ENCODE measurements at regions of chr22 and their contacts with region 1.

Region 1: GRCh38 chr22:36239401-36240171 is at the start of gene APOL2:
- DNase-seq: peak; percentile 92
- ATAC-seq: peak; percentile 96
- H3K4me3 Mint-ChIP-seq: peak within 1 kb of the TSS; percentile 99
- H3K27ac Mint-ChIP-seq: peak within 1 kb of the TSS; percentile 95
- H3K4me1 Mint-ChIP-seq: peaks cover 45% of the 10 kb centered on the region
- H3K27me3 Mint-ChIP-seq: no peaks in the 10 kb centered on the region
- total RNA-seq, gene APOL2: 82.6 to 86.4 TPM

Region 2: DNA sequence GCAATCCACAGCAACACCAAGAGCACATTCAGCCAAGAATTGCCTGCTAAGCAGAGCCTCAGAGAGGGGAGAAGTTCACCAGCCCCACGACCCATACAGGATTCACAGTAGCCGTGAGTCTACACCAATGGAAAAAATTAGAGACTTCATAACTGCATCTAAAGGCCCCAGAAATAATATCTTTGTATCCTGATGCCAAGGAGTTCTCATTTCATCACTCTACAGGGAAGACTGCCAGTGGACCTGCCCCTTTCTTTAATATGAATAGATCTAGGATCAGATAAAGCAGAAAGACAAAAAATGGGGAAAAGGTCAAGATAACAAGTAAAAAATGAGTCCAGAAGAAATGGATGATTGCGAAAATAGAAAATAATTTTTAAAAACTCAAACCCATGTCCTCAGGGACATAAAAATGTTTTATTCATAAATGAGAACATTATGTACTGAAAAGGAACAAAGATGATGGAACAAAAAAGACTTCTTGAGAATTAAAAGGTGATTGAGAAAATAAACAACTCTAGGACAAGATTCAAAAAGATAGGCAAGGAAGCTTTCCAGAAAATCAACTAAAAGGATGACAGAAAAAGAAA is 88.5 kb before region 1 on chr22:
- CTCF ChIA-PET with region 1: no interaction called
- DNase-seq: no peak
- ATAC-seq: no peak
- H3K4me3 Mint-ChIP-seq: no peak overlapping the region
- H3K27ac Mint-ChIP-seq: peak overlapping the region; percentile 41
- H3K4me1 Mint-ChIP-seq: peaks cover 59% of the 10 kb centered on the region
- H3K27me3 Mint-ChIP-seq: no peaks in the 10 kb centered on the region

Region 3: DNA sequence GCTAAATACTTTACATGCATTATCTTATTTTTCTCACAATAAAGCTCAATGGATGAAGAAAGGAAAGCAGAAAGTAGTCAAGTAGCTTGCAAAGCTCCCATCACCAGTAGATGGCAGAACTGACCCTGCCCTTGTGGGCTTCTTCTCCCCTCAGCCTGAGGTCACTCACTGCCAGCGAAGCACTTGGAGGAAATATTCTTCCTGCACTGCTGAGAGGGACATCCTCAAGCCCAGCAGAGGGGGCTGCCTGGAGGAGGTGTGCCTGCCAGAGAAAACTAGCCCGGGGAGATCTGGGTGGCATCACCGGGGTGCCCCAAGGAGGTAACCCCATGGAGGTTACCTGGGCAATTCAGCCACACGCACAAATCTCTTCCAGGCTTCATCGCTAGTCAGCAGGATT is 44.6 kb before region 1 on chr22:
- CTCF ChIA-PET with region 1: interaction called, 16 read pairs
- DNase-seq: peak; percentile 75
- ATAC-seq: peak; percentile 65
- H3K4me3 Mint-ChIP-seq: no peak overlapping the region
- H3K27ac Mint-ChIP-seq: no peak overlapping the region
- H3K4me1 Mint-ChIP-seq: peaks cover 47% of the 10 kb centered on the region
- H3K27me3 Mint-ChIP-seq: peaks cover 2% of the 10 kb centered on the region

Region 4: DNA sequence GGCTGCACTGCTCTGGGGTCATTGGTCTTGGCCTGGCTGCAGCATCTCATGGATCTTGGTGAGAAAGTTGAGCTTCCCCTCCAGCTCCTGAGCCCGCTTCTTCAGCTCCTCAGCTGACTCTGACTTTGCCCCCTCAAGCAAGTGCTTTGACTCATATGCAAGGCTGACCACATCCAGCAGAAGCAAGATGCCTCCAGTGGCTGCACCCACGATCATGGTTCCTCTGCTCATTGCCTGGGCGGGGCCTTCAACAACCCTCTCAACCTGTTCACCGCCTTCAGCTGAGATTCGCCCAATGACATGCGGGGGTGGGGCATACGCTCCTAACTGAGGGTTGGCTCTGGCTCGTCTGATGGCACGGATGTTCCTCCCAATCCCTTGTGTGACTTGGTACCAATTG is 12.2 kb before region 1 on chr22:
- CTCF ChIA-PET with region 1: interaction called, 19 read pairs
- DNase-seq: peak; percentile 64
- ATAC-seq: peak; percentile 65
- H3K4me3 Mint-ChIP-seq: no peak overlapping the region
- H3K27ac Mint-ChIP-seq: no peak overlapping the region
- H3K4me1 Mint-ChIP-seq: peaks cover 20% of the 10 kb centered on the region
- H3K27me3 Mint-ChIP-seq: no peaks in the 10 kb centered on the region

Region 5: DNA sequence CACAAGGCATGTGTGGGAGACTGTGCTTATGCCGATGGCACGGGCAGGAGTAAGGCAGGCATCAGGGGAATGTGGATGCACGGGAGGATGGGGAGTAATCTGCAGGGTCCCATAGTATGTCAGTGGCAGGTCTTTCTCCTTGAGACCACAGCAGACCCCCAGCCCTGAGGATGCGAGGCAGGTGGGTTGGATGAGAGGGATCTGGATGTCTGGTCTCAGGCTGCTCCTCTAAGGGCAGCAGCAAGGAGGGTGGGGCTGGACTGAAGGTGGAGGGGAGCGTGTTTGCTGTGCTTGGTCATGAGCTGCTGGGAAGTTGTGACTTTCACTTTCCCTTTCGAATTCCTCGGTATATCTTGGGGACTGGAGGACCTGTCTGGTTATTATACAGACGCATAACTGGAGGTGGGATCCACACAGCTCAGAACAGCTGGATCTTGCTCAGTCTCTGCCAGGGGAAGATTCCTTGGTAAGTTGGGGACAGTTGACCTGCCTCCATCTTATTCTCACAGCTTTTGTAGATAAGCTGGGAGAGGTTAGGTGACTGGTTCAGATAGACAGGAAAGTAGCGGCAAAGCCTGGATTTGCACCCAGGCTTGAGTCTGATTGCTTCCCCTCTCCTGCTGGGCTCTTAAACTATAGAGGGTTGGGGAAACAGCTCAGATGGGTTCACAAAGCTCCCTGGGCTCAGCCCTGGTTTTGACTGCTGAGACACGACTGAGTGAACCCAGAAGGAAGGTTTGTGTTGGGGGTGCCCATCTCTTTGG is 13.3 kb after region 1 on chr22 and contains the start of gene APOL1:
- CTCF ChIA-PET with region 1: interaction called, 67 read pairs
- DNase-seq: peak; percentile 80
- ATAC-seq: peak; percentile 93
- H3K4me3 Mint-ChIP-seq: peak within 1 kb of the TSS; percentile 90
- H3K27ac Mint-ChIP-seq: peak within 1 kb of the TSS; percentile 85
- H3K4me1 Mint-ChIP-seq: peaks cover 55% of the 10 kb centered on the region
- H3K27me3 Mint-ChIP-seq: no peaks in the 10 kb centered on the region
- total RNA-seq, gene APOL1: 55.6 to 61.6 TPM

Region 6: GRCh38 chr22:36277482-36278291 is 38.1 kb after region 1 on chr22:
- CTCF ChIA-PET with region 1: interaction called, 39 read pairs
- DNase-seq: peak; percentile 84
- ATAC-seq: peak; percentile 79
- H3K4me3 Mint-ChIP-seq: no peak overlapping the region
- H3K27ac Mint-ChIP-seq: peak overlapping the region; percentile 69
- H3K4me1 Mint-ChIP-seq: peaks cover 35% of the 10 kb centered on the region
- H3K27me3 Mint-ChIP-seq: no peaks in the 10 kb centered on the region

Region 7: DNA sequence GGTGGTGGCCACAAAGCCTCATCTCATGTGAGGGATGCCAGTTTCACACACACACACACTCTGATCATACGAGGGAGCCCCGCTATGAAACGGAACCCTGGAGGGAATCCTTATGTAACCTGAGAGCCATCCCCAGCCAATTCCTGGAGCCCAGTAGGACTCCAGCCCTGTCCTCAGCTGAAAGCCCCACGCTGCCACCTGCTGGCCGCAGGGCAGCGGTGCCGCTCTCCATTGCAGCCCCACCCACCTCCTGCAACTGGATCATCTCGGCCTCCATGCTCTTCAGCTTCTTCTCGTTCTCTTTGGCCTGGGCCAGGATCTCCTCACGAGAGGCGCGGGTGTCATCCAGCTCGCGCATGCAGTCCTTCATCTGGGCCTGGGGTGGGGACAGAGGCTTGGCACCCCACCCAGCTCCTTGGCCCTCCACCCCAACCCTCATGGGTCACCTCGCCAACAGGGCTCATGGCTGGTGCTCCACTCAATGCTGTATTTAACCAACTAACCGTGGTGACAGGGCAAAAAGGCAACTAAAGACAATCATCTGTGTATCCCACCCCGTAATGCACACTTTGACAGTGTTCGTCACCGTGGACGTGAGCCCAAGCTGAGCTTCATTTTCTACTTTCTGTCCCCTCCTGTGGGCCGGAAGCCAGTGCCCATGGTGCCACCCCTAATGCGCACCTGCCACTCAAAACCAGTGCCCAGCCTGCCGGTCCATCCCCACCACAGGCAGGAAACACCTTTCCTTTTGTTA is 47.1 kb after region 1 on chr22:
- CTCF ChIA-PET with region 1: interaction called, 12 read pairs
- DNase-seq: peak; percentile 72
- ATAC-seq: peak; percentile 78
- H3K4me3 Mint-ChIP-seq: no peak overlapping the region
- H3K27ac Mint-ChIP-seq: peak overlapping the region; percentile 33
- H3K4me1 Mint-ChIP-seq: peaks cover 42% of the 10 kb centered on the region
- H3K27me3 Mint-ChIP-seq: no peaks in the 10 kb centered on the region

Region 8: DNA sequence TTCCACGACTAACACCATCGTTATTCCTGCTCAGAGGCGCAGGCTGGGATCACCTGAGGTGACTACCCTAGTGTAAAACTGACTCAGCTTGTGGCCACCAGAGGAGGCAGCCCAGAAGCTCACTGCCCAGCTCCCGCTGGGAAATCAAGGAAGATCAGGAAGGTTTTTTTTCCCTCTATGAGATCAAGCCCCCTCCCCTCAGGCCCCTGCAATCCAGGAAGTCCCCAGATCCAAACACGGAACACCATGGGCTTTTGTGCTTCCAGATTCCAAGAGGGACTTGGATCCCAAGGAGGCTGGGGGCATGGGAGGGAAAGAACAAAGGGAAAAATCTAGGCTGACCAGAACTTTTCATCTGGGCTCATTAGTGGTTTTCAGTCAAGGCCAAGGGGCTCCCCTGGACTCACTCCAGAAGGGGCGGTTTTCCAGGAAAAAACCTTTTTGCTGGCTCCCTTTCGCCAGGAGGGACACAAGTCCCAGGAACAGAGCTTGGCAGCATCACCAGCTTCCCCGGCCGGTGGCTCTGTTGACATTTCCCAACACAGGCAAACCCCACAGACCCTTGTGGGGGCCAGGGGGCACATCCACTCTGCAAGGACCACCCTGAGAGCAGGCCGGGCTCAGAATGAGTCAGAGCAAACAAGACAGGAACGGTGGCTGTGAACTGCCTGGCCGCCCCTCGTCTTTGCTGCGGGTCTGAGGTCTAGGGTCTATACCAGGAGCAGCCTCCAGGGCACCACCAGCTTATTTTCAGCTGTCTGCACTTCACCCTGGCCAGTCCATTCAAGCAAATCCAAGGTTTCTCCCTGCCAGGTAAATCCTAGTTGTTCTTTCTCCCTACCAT is 111.4 kb after region 1 on chr22:
- CTCF ChIA-PET with region 1: no interaction called
- DNase-seq: no peak
- ATAC-seq: no peak
- H3K4me3 Mint-ChIP-seq: no peak overlapping the region
- H3K27ac Mint-ChIP-seq: peak overlapping the region; percentile 86
- H3K4me1 Mint-ChIP-seq: peaks cover 85% of the 10 kb centered on the region
- H3K27me3 Mint-ChIP-seq: no peaks in the 10 kb centered on the region

Measured in activated CD8-positive, alpha-beta memory T cell treated with anti-CD3 and anti-CD28 coated beads, Interleukin-2, amount 10 ng/mL, durations not matched to agents 7 days and 5 days (primary cell).